ENCODE measurements at regions of chr11 and their contacts with region 1.

Region 1: DNA sequence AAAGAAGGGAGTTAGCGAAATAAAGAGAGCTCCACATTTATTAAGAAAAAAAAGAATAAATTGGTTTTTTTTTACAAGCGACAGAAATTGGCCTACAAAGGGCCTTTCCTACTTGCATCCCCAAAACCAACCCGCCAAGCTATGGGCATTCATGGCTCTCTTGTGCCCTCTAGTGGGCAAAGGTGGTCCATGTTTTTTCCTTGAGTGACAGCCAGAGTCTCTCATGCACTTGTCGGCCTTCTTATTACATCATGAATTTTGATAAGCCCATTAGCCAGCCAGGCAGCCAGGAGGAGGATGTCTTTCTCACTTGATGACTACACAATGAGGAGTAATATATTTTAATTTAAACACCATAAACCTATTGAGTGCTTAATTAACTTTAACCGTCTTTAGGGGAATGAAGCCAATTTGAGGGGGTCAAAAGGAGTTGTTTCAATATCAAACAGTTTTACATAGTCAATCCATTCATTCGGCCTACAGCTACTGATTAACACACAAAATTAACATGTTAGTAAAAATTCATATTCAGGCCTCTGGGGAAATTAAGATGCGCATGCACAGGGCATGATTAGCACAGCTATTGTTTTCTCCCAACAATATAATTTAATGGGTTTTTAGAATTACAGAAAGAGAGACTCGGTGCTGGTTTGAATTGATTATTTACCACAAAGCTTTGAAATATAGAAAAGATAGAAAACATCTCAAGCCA is 85.5 kb downstream of the RCN1 start:
- DNase-seq: peak; percentile 67 to 71
- H3K4me3 ChIP-seq: no peak overlapping the region
- H3K27ac ChIP-seq: no peak overlapping the region
- H3K4me1 ChIP-seq: no peaks in the 10 kb centered on the region
- H3K27me3 ChIP-seq: no peaks in the 10 kb centered on the region
- CTCF ChIP-seq: peak; percentile 65 to 81 (median 75)
- POLR2A ChIP-seq: no peak

Region 2: DNA sequence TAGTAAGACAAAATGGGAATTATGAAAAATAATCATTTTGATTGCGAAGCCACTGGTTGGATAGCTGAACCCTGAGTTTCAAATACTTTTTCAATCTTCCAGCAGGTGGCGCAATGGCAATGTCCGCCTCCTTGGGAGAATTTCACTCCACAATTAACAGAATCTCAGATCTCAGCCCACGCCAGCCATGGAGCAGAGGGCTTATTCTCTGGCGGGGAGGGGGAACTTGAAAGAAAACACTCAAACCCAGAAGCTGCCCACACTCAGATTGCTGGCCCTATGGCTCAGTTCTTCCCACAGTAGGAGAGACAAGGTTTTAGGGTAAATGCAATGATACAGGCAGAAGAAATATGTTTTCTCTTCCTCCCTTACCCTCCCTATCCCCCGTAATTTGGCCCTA is 124.2 kb before region 1 on chr11:
- intact Hi-C with region 1: loop called (anchors 5 kb)
- DNase-seq: peak; percentile 25 to 53
- H3K4me3 ChIP-seq: no peak overlapping the region
- H3K27ac ChIP-seq: no peak overlapping the region
- H3K4me1 ChIP-seq: no peaks in the 10 kb centered on the region
- H3K27me3 ChIP-seq: peaks cover 0 to 3% of the 10 kb centered on the region in 2 donors
- CTCF ChIP-seq: peak; percentile 65 to 79 (median 77)
- POLR2A ChIP-seq: no peak

Region 3: DNA sequence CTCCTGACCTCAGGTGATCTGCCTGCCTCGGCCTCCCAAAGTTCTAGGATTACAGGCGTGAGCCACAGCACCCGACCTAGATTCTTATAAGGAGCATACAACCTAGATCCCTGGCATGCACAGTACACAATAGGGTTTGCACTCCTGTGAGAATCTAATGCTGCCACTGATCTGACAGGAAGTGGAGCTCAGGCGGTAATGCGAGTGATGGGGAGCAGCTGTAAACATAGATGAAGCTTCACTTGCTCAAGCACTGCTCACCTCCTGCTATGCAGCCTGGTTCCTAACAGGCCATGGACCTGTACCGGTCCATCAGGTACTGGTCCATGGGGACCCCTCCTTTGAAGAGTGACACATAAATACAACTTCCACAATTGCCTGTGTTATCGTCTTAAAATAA is 362.4 kb after region 1 on chr11:
- intact Hi-C with region 1: no loop called
- DNase-seq: no peak
- H3K4me3 ChIP-seq: no peak overlapping the region
- H3K27ac ChIP-seq: no peak overlapping the region
- H3K4me1 ChIP-seq: no peaks in the 10 kb centered on the region
- H3K27me3 ChIP-seq: no peaks in the 10 kb centered on the region
- CTCF ChIP-seq: no peak
- POLR2A ChIP-seq: no peak